Heart left ventricle (tissue), 16 donors: ENCODE measurements at regions of chr12 and their contacts with region 1.

Region 1: GRCh38 chr12:49824895-49825294 is 3.3 kb downstream of the NCKAP5L start:
- DNase-seq: no peak
- ATAC-seq: peak in 2 of 4 donors; percentile 8 to 18
- H3K4me3 ChIP-seq: peak overlapping the region in 6 of 12 donors; percentile 2 to 90 (median 18)
- H3K27ac ChIP-seq: peak overlapping the region in 11 of 12 donors; percentile 44 to 99 (median 95)
- H3K4me1 ChIP-seq: peaks cover 13 to 84% (median 72%) of the 10 kb centered on the region in 12 donors
- H3K27me3 ChIP-seq: no peaks in the 10 kb centered on the region
- CTCF ChIP-seq: no peak
- POLR2A ChIP-seq: no peak

Region 2: GRCh38 chr12:49783917-49784676 is 40.8 kb before region 1 on chr12:
- intact Hi-C with region 1: loop called in 1 of 10 experiments (anchors 5 kb)
- DNase-seq: no peak
- ATAC-seq: peak in 3 of 4 donors; percentile 56 to 73 (median 65)
- H3K4me3 ChIP-seq: no peak overlapping the region
- H3K27ac ChIP-seq: peak overlapping the region in 5 of 12 donors; percentile 11 to 72 (median 19)
- H3K4me1 ChIP-seq: peaks cover 0 to 22% (median 14%) of the 10 kb centered on the region in 12 donors
- H3K27me3 ChIP-seq: no peaks in the 10 kb centered on the region
- CTCF ChIP-seq: no peak
- POLR2A ChIP-seq: no peak